GM12878 (cell line): ENCODE measurements at regions of chr9 and their contacts with region 1.

Region 1: GRCh38 chr9:99162759-99163364 is 57.9 kb downstream of the TGFBR1 start:
- DNase-seq: no peak
- ATAC-seq: peak; percentile 72
- H3K4me3 ChIP-seq: no peak overlapping the region
- H3K27ac ChIP-seq: no peak overlapping the region
- H3K4me1 ChIP-seq: peaks cover 12% of the 10 kb centered on the region
- H3K27me3 ChIP-seq: no peaks in the 10 kb centered on the region
- CTCF ChIP-seq: peak; percentile 49 to 81 (median 65); a peak in 5 of 6 replicates
- EP300 ChIP-seq: no peak
- POLR2A ChIP-seq: no peak
- RAD21 ChIP-seq: peak; percentile 94

Region 2: DNA sequence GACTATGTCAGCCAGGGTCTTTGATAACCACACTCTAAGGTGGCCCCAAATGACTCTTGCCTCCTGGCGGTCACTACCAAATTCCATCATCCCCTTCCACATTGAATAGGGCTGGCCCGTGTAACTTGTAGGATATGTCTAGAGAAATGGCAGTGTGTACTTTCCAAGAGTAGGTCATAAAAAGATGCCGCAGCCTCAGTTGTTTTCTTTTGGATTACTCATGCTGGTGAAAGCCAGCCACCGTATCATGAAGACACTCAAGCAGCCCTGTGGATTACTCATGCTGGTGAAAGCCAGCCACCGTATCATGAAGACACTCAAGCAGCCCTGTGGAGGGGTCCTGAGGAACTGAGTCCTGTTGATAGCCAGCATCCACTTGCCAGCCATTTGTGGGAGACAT is 735.4 kb before region 1 on chr9:
- CTCF ChIA-PET with region 1: no interaction called
- POLR2A ChIA-PET with region 1: no interaction called
- RAD21 ChIA-PET with region 1: no interaction called
- SMC1A ChIA-PET with region 1: no interaction called
- in situ Hi-C with region 1: no loop called
- intact Hi-C with region 1: no loop called
- DNase-seq: no peak
- ATAC-seq: no peak
- H3K4me3 ChIP-seq: no peak overlapping the region
- H3K27ac ChIP-seq: no peak overlapping the region
- H3K4me1 ChIP-seq: no peaks in the 10 kb centered on the region
- H3K27me3 ChIP-seq: no peaks in the 10 kb centered on the region; a peak in 2 of 4 replicates
- CTCF ChIP-seq: no peak
- EP300 ChIP-seq: no peak
- POLR2A ChIP-seq: no peak
- RAD21 ChIP-seq: no peak

Region 3: GRCh38 chr9:99140685-99141314 is 22.1 kb before region 1 on chr9:
- CTCF ChIA-PET with region 1: interaction called, 11 read pairs
- POLR2A ChIA-PET with region 1: no interaction called
- RAD21 ChIA-PET with region 1: interaction called, 5 read pairs
- SMC1A ChIA-PET with region 1: interaction called, 8 read pairs
- in situ Hi-C with region 1: no loop called
- intact Hi-C with region 1: no loop called
- DNase-seq: no peak
- ATAC-seq: peak; percentile 91
- H3K4me3 ChIP-seq: no peak overlapping the region
- H3K27ac ChIP-seq: no peak overlapping the region
- H3K4me1 ChIP-seq: peaks cover 5% of the 10 kb centered on the region
- H3K27me3 ChIP-seq: no peaks in the 10 kb centered on the region
- CTCF ChIP-seq: peak; percentile 97 to 98 (median 97)
- EP300 ChIP-seq: no peak
- POLR2A ChIP-seq: no peak
- RAD21 ChIP-seq: peak; percentile 98

Region 4: GRCh38 chr9:99221621-99222415 is 59.0 kb after region 1 on chr9 and contains the starts of genes ALG2 and SEC61B:
- CTCF ChIA-PET with region 1: interaction called, 18 read pairs
- POLR2A ChIA-PET with region 1: interaction called, 8 read pairs
- RAD21 ChIA-PET with region 1: interaction called, 8 read pairs
- SMC1A ChIA-PET with region 1: interaction called, 34 read pairs
- in situ Hi-C with region 1: no loop called
- intact Hi-C with region 1: no loop called
- DNase-seq: peak; percentile 94
- ATAC-seq: peak; percentile 91
- H3K4me3 ChIP-seq: peak within 1 kb of the TSS; percentile 97
- H3K27ac ChIP-seq: peak within 1 kb of the TSS; percentile 99
- H3K4me1 ChIP-seq: peaks cover 9% of the 10 kb centered on the region
- H3K27me3 ChIP-seq: no peaks in the 10 kb centered on the region
- CTCF ChIP-seq: no peak
- EP300 ChIP-seq: peak in 1 of 2 experiments; percentile 51; a peak in 1 of 4 replicates
- POLR2A ChIP-seq: peak; percentile 97
- RAD21 ChIP-seq: no peak
- polyA plus RNA-seq, gene ALG2: 8.8 to 17.8 TPM
- polyA plus RNA-seq, gene SEC61B: 108 to 229 TPM

Region 5: DNA sequence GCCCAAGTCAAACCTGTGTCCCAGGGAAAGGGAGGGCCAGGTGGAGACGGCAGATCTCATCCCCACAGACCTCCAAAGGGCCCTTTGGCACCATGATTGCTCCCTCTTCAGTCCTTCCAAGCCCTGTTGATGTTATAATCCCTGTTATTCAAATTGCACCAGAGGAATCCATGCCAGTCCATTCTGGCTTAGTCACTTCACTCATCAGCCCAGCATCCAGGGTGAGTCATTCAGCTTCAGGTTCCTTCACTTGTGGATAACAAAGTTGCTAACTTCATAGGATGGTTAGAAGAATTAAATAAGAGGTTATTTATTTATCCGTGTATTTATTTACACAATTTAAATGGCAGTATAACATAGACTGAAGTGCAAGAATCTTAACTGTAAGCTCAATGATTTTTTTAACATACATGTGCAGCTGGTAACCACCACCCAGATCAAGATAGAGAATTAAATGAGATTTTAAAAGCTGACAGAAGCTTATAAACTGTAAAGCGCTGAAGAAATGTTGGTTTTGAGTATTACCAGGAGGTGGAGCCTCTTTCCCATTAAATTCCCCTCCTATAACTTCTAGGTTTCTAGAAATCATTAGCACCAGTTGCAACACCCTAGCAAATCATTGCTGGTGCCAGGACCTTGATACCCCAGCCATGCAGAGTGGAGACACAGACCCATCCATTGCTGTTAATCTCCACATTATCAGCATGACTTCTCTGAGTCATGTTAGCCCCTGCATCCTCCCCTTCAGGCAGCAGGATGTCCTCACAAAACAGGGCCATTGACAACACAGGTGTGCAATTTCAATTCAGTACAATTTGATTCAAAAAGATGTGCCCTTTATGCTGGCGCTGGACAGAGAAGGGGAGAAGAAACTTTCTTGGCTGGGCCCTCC is 136.6 kb after region 1 on chr9:
- CTCF ChIA-PET with region 1: interaction called, 12 read pairs
- POLR2A ChIA-PET with region 1: no interaction called
- RAD21 ChIA-PET with region 1: interaction called, 8 read pairs
- SMC1A ChIA-PET with region 1: interaction called, 6 read pairs
- in situ Hi-C with region 1: no loop called
- intact Hi-C with region 1: no loop called
- DNase-seq: no peak
- ATAC-seq: peak; percentile 55
- H3K4me3 ChIP-seq: no peak overlapping the region
- H3K27ac ChIP-seq: no peak overlapping the region
- H3K4me1 ChIP-seq: no peaks in the 10 kb centered on the region
- H3K27me3 ChIP-seq: no peaks in the 10 kb centered on the region
- CTCF ChIP-seq: peak in 2 of 3 experiments; percentile 15 to 39; a peak in 2 of 6 replicates
- EP300 ChIP-seq: no peak
- POLR2A ChIP-seq: no peak
- RAD21 ChIP-seq: peak; percentile 61

Region 6: DNA sequence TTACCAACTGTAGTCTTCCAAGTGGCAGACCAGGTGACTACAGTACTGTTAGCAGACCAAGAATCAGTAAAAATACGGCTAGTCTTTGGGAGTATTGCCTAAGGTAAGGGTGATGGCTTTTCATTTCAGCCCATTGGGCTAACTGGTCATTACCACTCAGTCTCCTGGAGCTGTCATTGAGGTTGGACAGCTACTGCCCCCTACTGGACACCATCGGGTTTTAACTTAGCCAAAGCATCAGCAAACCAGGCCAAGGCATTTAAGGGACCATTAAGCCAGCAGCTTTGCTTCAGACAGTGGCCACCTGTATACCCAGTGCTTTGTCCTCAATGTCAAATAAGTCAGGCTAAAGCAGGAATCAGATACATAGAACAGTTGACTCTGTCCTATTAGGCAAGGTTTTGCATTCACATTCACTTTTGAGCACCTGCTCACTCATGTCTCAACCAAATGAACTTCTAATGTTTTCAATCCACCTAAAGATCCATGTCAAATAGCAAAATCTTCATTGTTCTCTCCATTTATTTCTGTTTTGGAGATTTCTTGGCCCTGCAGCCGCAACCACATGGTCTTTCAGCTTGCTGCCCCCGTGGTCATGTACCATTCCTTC is 1053.4 kb after region 1 on chr9:
- CTCF ChIA-PET with region 1: interaction called, 6 read pairs
- POLR2A ChIA-PET with region 1: no interaction called
- RAD21 ChIA-PET with region 1: no interaction called
- SMC1A ChIA-PET with region 1: interaction called, 3 read pairs
- in situ Hi-C with region 1: loop called (anchors 10 kb)
- intact Hi-C with region 1: loop called (anchors 5 kb)
- DNase-seq: peak; percentile 40
- ATAC-seq: peak; percentile 96
- H3K4me3 ChIP-seq: no peak overlapping the region
- H3K27ac ChIP-seq: no peak overlapping the region
- H3K4me1 ChIP-seq: peaks cover 17% of the 10 kb centered on the region
- H3K27me3 ChIP-seq: no peaks in the 10 kb centered on the region
- CTCF ChIP-seq: peak; percentile 75 to 79 (median 77)
- EP300 ChIP-seq: no peak
- POLR2A ChIP-seq: no peak
- RAD21 ChIP-seq: peak; percentile 88

Region 7: GRCh38 chr9:100322954-100323536 is 1160.2 kb after region 1 on chr9:
- CTCF ChIA-PET with region 1: interaction called, 6 read pairs
- POLR2A ChIA-PET with region 1: no interaction called
- RAD21 ChIA-PET with region 1: interaction called, 9 read pairs
- SMC1A ChIA-PET with region 1: interaction called, 3 read pairs
- in situ Hi-C with region 1: loop called (anchors 10 kb)
- intact Hi-C with region 1: loop called (anchors 5 kb)
- DNase-seq: no peak
- ATAC-seq: peak; percentile 69
- H3K4me3 ChIP-seq: no peak overlapping the region
- H3K27ac ChIP-seq: no peak overlapping the region
- H3K4me1 ChIP-seq: no peaks in the 10 kb centered on the region
- H3K27me3 ChIP-seq: no peaks in the 10 kb centered on the region
- CTCF ChIP-seq: peak; percentile 55 to 74 (median 65)
- EP300 ChIP-seq: no peak
- POLR2A ChIP-seq: no peak
- RAD21 ChIP-seq: peak; percentile 65

Region 8: DNA sequence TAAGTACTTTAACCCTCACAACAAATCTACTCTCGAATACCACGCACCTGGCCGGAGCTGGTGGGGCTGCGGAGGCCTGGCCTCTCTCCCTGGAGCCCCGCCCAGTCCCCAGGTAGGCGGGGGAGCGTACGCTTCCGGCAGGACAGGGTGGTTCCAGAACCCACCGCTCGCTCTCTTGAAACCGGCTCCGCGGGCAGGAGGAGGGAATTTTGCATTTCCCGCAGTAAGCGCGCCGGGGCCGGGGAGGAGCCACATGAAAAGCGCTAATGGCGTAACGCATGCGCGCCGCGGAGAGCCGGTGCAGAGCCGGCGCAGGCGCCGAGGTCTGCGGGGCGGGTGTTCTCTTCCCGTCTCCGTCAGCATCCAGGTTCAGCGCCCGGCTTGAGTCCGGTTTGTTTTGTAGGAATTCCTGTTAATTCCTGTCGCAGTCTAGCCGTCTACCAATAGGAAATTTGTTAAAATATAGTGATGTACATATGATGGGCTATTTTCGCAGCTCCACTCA is 1435.8 kb after region 1 on chr9:
- CTCF ChIA-PET with region 1: interaction called, 15 read pairs
- POLR2A ChIA-PET with region 1: no interaction called
- RAD21 ChIA-PET with region 1: no interaction called
- SMC1A ChIA-PET with region 1: no interaction called
- in situ Hi-C with region 1: loop called (anchors 5 kb)
- intact Hi-C with region 1: loop called (anchors 2 kb)
- DNase-seq: no peak
- ATAC-seq: peak; percentile 87
- H3K4me3 ChIP-seq: peak overlapping the region; percentile 59; the same call in 1 of the 2 replicates
- H3K27ac ChIP-seq: no peak overlapping the region
- H3K4me1 ChIP-seq: no peaks in the 10 kb centered on the region
- H3K27me3 ChIP-seq: no peaks in the 10 kb centered on the region; a peak in 2 of 4 replicates
- CTCF ChIP-seq: no peak
- EP300 ChIP-seq: no peak
- POLR2A ChIP-seq: peak; percentile 47; the same call in 1 of the 2 replicates
- RAD21 ChIP-seq: no peak